ENCODE measurements at regions of chr19 and their contacts with region 1.

Region 1: GRCh38 chr19:2151339-2152229 is at the start of gene AP3D1:
- DNase-seq: peak; percentile 100
- H3K4me3 ChIP-seq: peak within 1 kb of the TSS; percentile 60 to 96 (median 61)
- H3K27ac ChIP-seq: peak within 1 kb of the TSS; percentile 75
- H3K4me1 ChIP-seq: peaks cover 8% of the 10 kb centered on the region
- H3K27me3 ChIP-seq: no peaks in the 10 kb centered on the region
- CTCF ChIP-seq: no peak
- POLR2A ChIP-seq: no peak
- total RNA-seq, gene AP3D1: 137 and 143 TPM in 2 replicates

Region 2: GRCh38 chr19:2168619-2169424 is 17.2 kb after region 1 on chr19:
- CTCF ChIA-PET with region 1: interaction called, 12 read pairs
- POLR2A ChIA-PET with region 1: interaction called, 5 read pairs
- dilution Hi-C with region 1: no loop called
- intact Hi-C with region 1: no loop called
- DNase-seq: peak; percentile 99
- H3K4me3 ChIP-seq: no peak overlapping the region
- H3K27ac ChIP-seq: peak overlapping the region; percentile 85
- H3K4me1 ChIP-seq: peaks cover 39% of the 10 kb centered on the region
- H3K27me3 ChIP-seq: no peaks in the 10 kb centered on the region
- CTCF ChIP-seq: no peak
- POLR2A ChIP-seq: no peak

Region 3: GRCh38 chr19:2207991-2208860 is 56.6 kb after region 1 on chr19:
- CTCF ChIA-PET with region 1: interaction called, 13 read pairs
- POLR2A ChIA-PET with region 1: no interaction called
- dilution Hi-C with region 1: no loop called
- intact Hi-C with region 1: no loop called
- DNase-seq: peak; percentile 53
- H3K4me3 ChIP-seq: no peak overlapping the region
- H3K27ac ChIP-seq: no peak overlapping the region
- H3K4me1 ChIP-seq: peaks cover 7% of the 10 kb centered on the region
- H3K27me3 ChIP-seq: no peaks in the 10 kb centered on the region
- CTCF ChIP-seq: peak in 1 of 2 donors; percentile 44
- POLR2A ChIP-seq: no peak

Region 4: GRCh38 chr19:2253106-2254053 is 101.8 kb after region 1 on chr19:
- CTCF ChIA-PET with region 1: interaction called, 15 read pairs
- POLR2A ChIA-PET with region 1: no interaction called
- dilution Hi-C with region 1: no loop called
- intact Hi-C with region 1: no loop called
- DNase-seq: no peak
- H3K4me3 ChIP-seq: no peak overlapping the region
- H3K27ac ChIP-seq: no peak overlapping the region
- H3K4me1 ChIP-seq: peaks cover 11% of the 10 kb centered on the region
- H3K27me3 ChIP-seq: peaks cover 22 to 40% of the 10 kb centered on the region in 2 experiments
- CTCF ChIP-seq: peak in 1 of 2 donors; percentile 45
- POLR2A ChIP-seq: no peak

Region 5: GRCh38 chr19:2315818-2316353 is 164.3 kb after region 1 on chr19:
- CTCF ChIA-PET with region 1: interaction called, 36 read pairs
- POLR2A ChIA-PET with region 1: no interaction called
- dilution Hi-C with region 1: no loop called
- intact Hi-C with region 1: loop called (anchors 1 kb)
- DNase-seq: peak; percentile 48
- H3K4me3 ChIP-seq: no peak overlapping the region
- H3K27ac ChIP-seq: no peak overlapping the region
- H3K4me1 ChIP-seq: no peaks in the 10 kb centered on the region
- H3K27me3 ChIP-seq: peaks cover 1 to 10% of the 10 kb centered on the region in 2 experiments
- CTCF ChIP-seq: peak; percentile 54 to 64
- POLR2A ChIP-seq: no peak

Measured in endothelial cell of umbilical vein (primary cell).